ENCODE measurements at regions of chr14 and their contacts with region 1.

Region 1: DNA sequence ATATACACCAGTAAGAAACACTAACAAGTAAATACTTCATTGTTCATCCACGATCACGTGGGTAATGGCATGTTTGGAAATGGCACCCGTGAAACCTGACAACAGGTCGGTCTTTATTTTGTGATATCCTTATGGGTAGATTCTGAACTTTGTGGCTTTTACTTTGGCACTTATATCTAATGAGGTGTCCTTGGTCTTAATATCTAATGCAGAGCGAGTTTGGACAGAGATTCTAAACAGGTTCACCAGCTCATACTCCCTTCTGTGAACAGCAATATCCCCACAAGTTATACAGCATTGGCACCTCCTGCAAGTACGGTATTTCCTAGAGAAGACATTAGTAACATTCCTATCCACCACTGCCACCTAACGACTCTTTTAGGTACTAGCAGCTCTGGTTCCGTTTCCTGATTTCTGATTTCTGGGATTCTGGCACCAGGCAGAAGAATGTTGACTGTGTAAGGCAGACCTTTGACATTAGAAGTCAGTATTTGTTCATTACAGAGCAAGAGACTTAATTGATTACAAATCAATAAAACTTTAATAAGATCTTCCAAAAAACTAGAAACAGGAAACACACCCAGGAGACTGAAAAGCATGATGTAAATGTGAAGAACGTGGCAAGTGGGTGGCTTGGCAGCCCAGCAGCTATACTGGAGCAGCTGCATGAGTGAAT is 2.4 kb downstream of the ANG start:
- DNase-seq: peak; percentile 31
- H3K4me3 Mint-ChIP-seq: no peak overlapping the region
- H3K27ac Mint-ChIP-seq: no peak overlapping the region
- H3K4me1 Mint-ChIP-seq: peaks cover 8% of the 10 kb centered on the region
- H3K27me3 Mint-ChIP-seq: no peaks in the 10 kb centered on the region

Region 2: GRCh38 chr14:20530771-20531571 is 160.0 kb before region 1 on chr14:
- intact Hi-C with region 1: loop called (anchors 1 kb)
- DNase-seq: peak; percentile 43
- H3K4me3 Mint-ChIP-seq: no peak overlapping the region
- H3K27ac Mint-ChIP-seq: no peak overlapping the region
- H3K4me1 Mint-ChIP-seq: peaks cover 9% of the 10 kb centered on the region
- H3K27me3 Mint-ChIP-seq: peaks cover 50% of the 10 kb centered on the region

Region 3: GRCh38 chr14:20632682-20633428 is 58.1 kb before region 1 on chr14:
- intact Hi-C with region 1: loop called (anchors 2 kb)
- DNase-seq: peak; percentile 53
- H3K4me3 Mint-ChIP-seq: peak overlapping the region; percentile 85
- H3K27ac Mint-ChIP-seq: peak overlapping the region; percentile 91
- H3K4me1 Mint-ChIP-seq: peaks cover 56% of the 10 kb centered on the region
- H3K27me3 Mint-ChIP-seq: peaks cover 76% of the 10 kb centered on the region

Region 4: GRCh38 chr14:20662968-20663732 is 27.8 kb before region 1 on chr14:
- intact Hi-C with region 1: loop called (anchors 1 kb)
- DNase-seq: peak; percentile 69
- H3K4me3 Mint-ChIP-seq: peak overlapping the region; percentile 82
- H3K27ac Mint-ChIP-seq: peak overlapping the region; percentile 28
- H3K4me1 Mint-ChIP-seq: peaks cover 38% of the 10 kb centered on the region
- H3K27me3 Mint-ChIP-seq: peaks cover 11% of the 10 kb centered on the region

Measured in activated T-helper 1 cell treated with anti-CD3 and anti-CD28 coated beads, Interleukin-12 subunit alpha, Interleukin-12 subunit beta, Interleukin-2, Interleukin-4 antibody, amounts not matched to agents 30 ng/mL and 10 ng/mL and 1 ng/mL, durations not matched to agents 14 hours and 24 hours and 36 hours (primary cell).